ENCODE measurements at regions of chr1 and their contacts with region 1.

Region 1: DNA sequence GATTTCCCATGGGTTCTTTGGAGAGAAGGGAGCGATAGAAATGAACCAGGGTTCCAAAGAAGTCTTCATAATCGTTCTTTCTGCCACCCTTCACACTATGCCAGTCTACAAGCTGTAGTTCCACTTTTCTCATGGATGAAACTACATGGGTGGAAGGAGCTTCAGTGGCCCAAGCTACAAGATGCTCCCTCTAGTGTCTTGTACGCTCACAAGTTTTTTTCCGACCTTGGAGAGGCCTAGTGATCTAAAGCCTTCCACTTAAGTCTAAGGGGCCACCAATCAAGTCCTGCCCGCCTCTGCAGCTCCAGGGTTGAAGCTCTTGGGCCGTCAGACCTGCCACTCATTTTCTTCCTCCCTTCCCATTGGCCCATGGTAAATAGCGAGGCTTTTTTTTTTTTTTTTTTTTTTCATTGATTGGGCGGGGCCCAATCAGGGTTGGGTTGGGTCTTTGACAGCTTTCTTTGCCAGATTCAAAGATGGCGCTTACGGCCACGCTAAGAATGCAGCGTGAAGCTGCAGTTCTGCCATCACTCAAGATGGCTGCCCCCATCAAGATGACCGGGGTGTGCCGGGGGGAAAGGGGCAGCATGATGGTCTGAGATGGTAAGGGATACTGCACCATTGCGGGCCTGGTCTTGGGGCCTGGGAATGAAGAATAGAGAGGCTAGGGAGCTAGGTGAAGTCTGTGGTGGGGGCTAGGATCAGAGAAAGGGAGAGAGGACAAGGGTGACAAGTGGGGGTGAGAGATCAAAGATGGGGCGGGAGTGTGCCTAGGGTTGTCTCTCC is at the start of gene TOMM40L:
- DNase-seq: peak; percentile 90
- ATAC-seq: peak; percentile 92
- H3K4me3 ChIP-seq: peak within 1 kb of the TSS; percentile 82 to 86
- H3K27ac ChIP-seq: peak within 1 kb of the TSS; percentile 90
- H3K4me1 ChIP-seq: peaks cover 19% of the 10 kb centered on the region
- H3K27me3 ChIP-seq: no peaks in the 10 kb centered on the region
- CTCF ChIP-seq: peak; percentile 58; the same call in 1 of the 2 replicates
- total RNA-seq, gene TOMM40L: 9.2 TPM

Region 2: DNA sequence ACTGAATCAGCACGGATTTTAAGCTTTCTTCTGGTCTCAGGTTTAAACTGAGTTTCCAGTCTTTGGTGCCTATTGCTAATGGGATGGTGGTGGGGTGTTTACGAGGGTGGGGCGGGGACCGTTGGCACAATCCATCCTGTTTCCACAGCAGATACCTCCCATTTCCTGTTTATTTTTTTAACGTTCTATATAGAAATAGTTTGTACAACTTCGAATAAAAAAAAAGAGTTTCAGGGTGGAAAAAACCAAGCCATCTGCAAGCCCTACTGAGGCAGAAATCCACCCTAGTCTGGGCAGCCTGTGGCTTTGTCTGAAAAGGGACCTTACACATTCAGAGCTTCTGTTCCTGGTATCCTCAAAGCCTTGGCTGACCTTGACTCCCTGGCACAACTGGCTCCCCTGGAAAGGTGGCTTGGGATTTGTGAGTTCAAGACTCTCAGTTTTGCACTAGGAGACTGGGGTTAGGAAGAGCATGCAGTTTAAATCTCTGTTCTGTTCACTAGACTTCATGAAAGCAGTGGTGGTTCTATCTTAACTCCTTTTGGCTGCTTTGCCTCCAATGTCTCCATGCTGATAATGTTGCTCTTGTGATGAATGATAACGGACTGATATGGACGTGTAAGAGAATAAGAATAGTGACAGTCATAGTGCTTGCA is 778.7 kb before region 1 on chr1:
- CTCF ChIA-PET with region 1: no interaction called
- POLR2A ChIA-PET with region 1: interaction called, 18 read pairs
- in situ Hi-C with region 1: no loop called
- intact Hi-C with region 1: no loop called
- DNase-seq: no peak
- ATAC-seq: no peak
- H3K4me3 ChIP-seq: no peak overlapping the region
- H3K27ac ChIP-seq: no peak overlapping the region
- H3K4me1 ChIP-seq: no peaks in the 10 kb centered on the region
- H3K27me3 ChIP-seq: no peaks in the 10 kb centered on the region; the same call in 1 of the 2 replicates
- CTCF ChIP-seq: no peak

Region 3: DNA sequence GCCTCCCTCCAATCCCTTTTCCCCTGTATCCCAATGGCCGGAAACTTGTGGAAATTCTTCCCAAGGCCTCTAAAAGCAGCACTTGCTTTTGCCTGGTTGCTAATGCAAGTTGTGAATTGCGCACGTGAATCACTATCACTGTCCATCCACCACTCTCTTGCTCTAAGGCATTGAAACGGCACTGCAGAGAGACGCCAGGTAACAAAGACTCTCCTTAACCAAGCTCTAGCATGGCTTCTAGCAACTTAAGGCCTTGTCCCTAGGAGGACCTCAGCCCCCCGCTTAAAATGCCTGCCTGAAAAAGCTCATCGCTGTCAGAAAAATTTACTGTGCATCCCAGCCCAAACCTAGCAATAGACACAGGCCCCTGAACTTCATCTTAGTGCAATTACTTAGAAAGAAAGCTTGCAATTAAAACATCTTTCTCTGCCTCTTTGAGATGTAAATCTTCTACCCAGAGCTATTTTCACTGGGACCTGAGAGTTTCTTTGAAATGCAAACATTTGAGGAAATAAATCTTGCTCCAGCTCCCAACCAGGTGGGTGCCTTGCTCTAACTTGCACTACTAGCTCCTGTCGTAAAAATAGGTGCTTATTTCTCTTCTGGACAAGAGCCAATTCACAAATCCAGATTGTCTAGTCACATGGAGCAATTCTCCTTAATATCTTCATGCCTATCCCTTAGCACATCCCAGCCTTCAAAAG is 238.2 kb before region 1 on chr1:
- CTCF ChIA-PET with region 1: no interaction called
- POLR2A ChIA-PET with region 1: no interaction called
- in situ Hi-C with region 1: no loop called
- intact Hi-C with region 1: no loop called
- DNase-seq: no peak
- ATAC-seq: no peak
- H3K4me3 ChIP-seq: no peak overlapping the region
- H3K27ac ChIP-seq: no peak overlapping the region
- H3K4me1 ChIP-seq: no peaks in the 10 kb centered on the region
- H3K27me3 ChIP-seq: no peaks in the 10 kb centered on the region
- CTCF ChIP-seq: no peak

Region 4: DNA sequence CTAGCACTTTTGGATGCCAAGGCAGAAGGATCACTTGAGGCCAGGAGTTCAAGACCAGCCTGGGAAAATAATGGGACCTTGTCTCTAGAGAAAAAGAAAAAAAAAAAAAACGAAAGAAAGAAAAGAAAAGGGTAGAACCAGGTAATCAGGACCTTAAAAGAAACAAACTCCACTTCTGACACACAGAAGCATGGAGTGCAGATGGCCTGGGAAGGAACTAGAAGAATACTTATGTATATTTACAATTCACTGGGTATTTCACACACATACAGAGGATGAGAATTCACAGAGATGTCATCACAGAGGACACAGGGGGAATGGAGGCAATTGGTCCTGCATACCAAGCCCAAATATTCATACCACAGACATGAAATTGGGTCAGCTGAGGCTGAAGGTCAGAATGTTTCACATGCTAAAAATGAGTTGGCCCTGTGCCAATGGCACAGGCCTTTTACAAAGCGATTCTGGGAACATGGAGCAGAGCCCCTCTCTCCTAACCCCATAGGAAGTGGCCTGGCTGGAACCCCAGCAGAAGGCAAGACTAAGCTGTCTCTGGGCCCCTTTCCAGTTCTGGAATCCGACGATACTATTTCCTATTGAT is 52.9 kb before region 1 on chr1:
- CTCF ChIA-PET with region 1: no interaction called
- POLR2A ChIA-PET with region 1: no interaction called
- in situ Hi-C with region 1: no loop called
- intact Hi-C with region 1: no loop called
- DNase-seq: no peak
- ATAC-seq: no peak
- H3K4me3 ChIP-seq: no peak overlapping the region
- H3K27ac ChIP-seq: no peak overlapping the region
- H3K4me1 ChIP-seq: peaks cover 6% of the 10 kb centered on the region
- H3K27me3 ChIP-seq: no peaks in the 10 kb centered on the region
- CTCF ChIP-seq: no peak

Region 5: DNA sequence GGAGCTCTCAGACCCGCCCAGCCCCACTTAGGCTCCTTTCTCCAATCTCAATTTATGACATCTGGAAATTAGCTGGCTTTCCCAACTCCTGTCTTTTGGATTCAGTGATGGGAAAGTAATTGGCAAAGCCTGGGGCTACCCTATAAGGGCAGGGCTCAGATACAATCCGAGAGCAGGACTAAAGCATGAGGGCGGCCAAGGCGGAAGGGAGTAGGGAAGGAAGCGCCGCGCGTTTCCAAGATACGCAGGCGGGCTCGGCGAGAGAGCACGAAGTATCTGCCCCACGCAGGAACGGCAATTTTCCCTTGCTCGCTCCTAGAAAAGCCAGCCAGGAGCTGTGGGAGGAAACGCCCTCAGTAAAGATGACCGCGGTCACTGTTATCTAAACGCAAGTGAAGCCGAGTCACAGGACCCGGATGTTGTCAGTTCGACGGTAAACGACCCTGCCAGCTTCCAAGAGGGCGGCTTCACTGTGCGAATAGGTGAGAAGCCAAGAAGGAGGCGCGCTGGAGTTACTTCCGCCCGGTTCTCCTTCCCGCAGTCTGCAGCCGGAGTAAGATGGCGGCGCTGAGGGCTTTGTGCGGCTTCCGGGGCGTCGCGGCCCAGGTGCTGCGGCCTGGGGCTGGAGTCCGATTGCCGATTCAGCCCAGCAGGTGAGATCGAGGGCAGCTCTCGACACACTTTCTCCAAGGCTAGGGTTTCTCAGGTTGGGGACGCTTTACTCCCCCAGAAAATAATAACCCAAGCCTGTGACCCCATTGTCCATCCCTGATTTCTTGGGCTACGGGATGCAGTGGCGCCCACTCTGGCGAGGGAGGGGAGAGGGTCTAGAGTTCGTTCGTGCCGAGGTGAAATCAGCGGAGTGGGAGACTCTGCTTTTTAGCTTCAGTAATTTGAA is 23.6 kb before region 1 on chr1 and contains the start of gene NDUFS2:
- CTCF ChIA-PET with region 1: interaction called, 3 read pairs
- POLR2A ChIA-PET with region 1: interaction called, 11 read pairs
- in situ Hi-C with region 1: no loop called
- intact Hi-C with region 1: no loop called
- DNase-seq: peak; percentile 89
- ATAC-seq: peak; percentile 97
- H3K4me3 ChIP-seq: peak within 1 kb of the TSS; percentile 72 to 98
- H3K27ac ChIP-seq: peak within 1 kb of the TSS; percentile 96
- H3K4me1 ChIP-seq: peaks cover 38% of the 10 kb centered on the region
- H3K27me3 ChIP-seq: no peaks in the 10 kb centered on the region
- CTCF ChIP-seq: no peak
- total RNA-seq, gene NDUFS2: 94.9 TPM

Region 6: DNA sequence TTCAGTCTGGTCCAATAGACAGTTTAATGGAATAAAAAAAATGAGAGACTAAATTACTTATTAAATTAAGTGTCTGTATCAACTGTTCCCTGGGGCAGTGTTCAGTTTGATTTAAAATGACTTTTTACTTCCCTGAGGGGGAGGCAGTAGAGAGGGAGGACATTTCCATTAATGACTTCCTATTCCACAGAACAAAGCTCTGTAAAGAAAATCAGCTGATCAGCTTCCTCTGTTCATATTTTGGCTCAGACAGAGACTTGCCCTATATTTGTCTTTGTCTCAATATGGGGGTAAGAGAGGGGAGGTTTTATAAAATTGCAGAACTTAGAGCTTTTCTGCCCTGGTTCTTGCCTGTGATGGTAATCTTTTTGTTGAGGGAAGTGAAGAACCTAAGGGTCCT is 133.6 kb after region 1 on chr1:
- CTCF ChIA-PET with region 1: interaction called, 10 read pairs
- POLR2A ChIA-PET with region 1: no interaction called
- in situ Hi-C with region 1: no loop called
- intact Hi-C with region 1: no loop called
- DNase-seq: no peak
- ATAC-seq: no peak
- H3K4me3 ChIP-seq: no peak overlapping the region
- H3K27ac ChIP-seq: no peak overlapping the region
- H3K4me1 ChIP-seq: no peaks in the 10 kb centered on the region
- H3K27me3 ChIP-seq: no peaks in the 10 kb centered on the region
- CTCF ChIP-seq: no peak

Region 7: GRCh38 chr1:161382214-161383019 is 156.7 kb after region 1 on chr1:
- CTCF ChIA-PET with region 1: interaction called, 13 read pairs
- POLR2A ChIA-PET with region 1: interaction called, 3 read pairs
- in situ Hi-C with region 1: loop called (anchors 25 kb)
- intact Hi-C with region 1: no loop called
- DNase-seq: peak; percentile 68
- ATAC-seq: peak; percentile 92
- H3K4me3 ChIP-seq: peak overlapping the region in 1 of 2 experiments; percentile 21; a peak in 2 of 4 replicates
- H3K27ac ChIP-seq: peak overlapping the region; percentile 79
- H3K4me1 ChIP-seq: peaks cover 20% of the 10 kb centered on the region
- H3K27me3 ChIP-seq: no peaks in the 10 kb centered on the region
- CTCF ChIP-seq: peak; percentile 71; the same call in 1 of the 2 replicates